AG04450 (cell line): ENCODE measurements at regions of chr17 and their contacts with region 1.

Region 1: GRCh38 chr17:20226814-20227482 is 217.8 kb downstream of the SPECC1 start:
- DNase-seq: peak; percentile 68
- H3K4me3 ChIP-seq: no peak overlapping the region
- H3K27ac ChIP-seq: peak overlapping the region; percentile 62
- H3K27me3 ChIP-seq: no peaks in the 10 kb centered on the region
- CTCF ChIP-seq: peak; percentile 87

Region 2: GRCh38 chr17:20206068-20206467 is 20.9 kb before region 1 on chr17:
- CTCF ChIA-PET with region 1: interaction called, 12 read pairs
- POLR2A ChIA-PET with region 1: no interaction called
- DNase-seq: no peak
- H3K4me3 ChIP-seq: no peak overlapping the region
- H3K27ac ChIP-seq: no peak overlapping the region
- H3K27me3 ChIP-seq: no peaks in the 10 kb centered on the region
- CTCF ChIP-seq: no peak

Region 3: GRCh38 chr17:20216154-20216815 is 10.7 kb before region 1 on chr17:
- CTCF ChIA-PET with region 1: interaction called, 10 read pairs
- POLR2A ChIA-PET with region 1: no interaction called
- DNase-seq: no peak
- H3K4me3 ChIP-seq: no peak overlapping the region
- H3K27ac ChIP-seq: no peak overlapping the region
- H3K27me3 ChIP-seq: no peaks in the 10 kb centered on the region
- CTCF ChIP-seq: no peak

Region 4: GRCh38 chr17:20262226-20263114 is 35.5 kb after region 1 on chr17:
- CTCF ChIA-PET with region 1: no interaction called
- POLR2A ChIA-PET with region 1: no interaction called
- DNase-seq: no peak
- H3K4me3 ChIP-seq: no peak overlapping the region
- H3K27ac ChIP-seq: no peak overlapping the region
- H3K27me3 ChIP-seq: no peaks in the 10 kb centered on the region
- CTCF ChIP-seq: no peak